Calu3 (cell line): ENCODE measurements at regions of chr3 and their contacts with region 1.

Region 1: GRCh38 chr3:165854696-165855095 is 17.5 kb upstream of the BCHE start:
- DNase-seq: no peak
- H3K4me3 Mint-ChIP-seq: no peak overlapping the region
- H3K27ac Mint-ChIP-seq: no peak overlapping the region
- H3K4me1 Mint-ChIP-seq: peaks cover 7% of the 10 kb centered on the region
- H3K27me3 Mint-ChIP-seq: no peaks in the 10 kb centered on the region
- CTCF ChIP-seq: peak; percentile 90

Region 2: DNA sequence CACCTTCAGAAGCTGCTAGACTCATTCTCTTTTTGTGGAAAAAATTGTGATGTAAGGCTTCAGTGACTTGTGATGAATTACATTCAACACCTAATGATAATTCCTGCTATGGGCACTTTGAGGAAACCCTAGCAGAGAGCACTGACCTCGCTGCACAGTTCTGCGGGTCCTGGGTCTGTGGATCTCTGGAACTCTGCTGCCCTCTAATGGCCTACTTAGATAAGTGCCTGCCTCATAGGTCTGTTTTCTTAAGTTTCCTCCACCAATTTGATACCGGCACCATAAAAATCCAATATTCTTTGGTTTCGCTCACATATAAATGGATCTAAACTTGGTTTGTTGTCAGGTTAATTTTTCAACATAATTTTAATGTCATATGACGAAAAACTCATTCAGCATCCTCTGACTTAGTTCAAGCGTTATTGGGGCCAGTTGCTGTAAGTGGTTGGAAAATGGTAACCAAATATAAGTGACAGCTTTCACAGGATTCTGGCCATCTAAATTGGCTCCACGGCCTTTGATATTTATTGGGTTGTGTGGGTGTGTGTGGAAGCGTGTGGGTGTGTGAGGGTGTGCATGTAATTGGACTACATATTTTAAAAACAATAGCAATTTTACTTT is 668.9 kb before region 1 on chr3:
- CTCF ChIA-PET with region 1: no interaction called
- intact Hi-C with region 1: no loop called
- DNase-seq: peak; percentile 81
- H3K4me3 Mint-ChIP-seq: no peak overlapping the region
- H3K27ac Mint-ChIP-seq: no peak overlapping the region
- H3K4me1 Mint-ChIP-seq: peaks cover 8% of the 10 kb centered on the region
- H3K27me3 Mint-ChIP-seq: no peaks in the 10 kb centered on the region
- CTCF ChIP-seq: peak; percentile 91

Region 3: DNA sequence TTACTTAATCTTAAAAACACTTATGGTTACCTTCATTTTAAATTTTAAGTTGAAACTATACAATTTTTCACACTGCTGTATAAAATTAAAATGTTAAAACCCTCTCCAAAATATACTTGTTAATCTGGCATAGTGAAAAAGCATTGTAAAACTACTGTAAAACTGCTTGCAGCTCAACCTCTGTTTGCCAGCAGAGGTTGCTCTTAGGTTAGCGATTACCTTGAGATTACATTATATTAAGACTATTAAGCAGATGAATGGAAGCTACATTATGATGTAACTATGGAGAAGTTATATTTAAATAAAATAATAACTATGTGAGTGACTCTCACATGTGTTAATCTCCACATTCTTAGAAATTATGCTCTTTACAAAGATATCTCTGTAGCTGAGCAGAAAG is 514.9 kb before region 1 on chr3:
- CTCF ChIA-PET with region 1: interaction called, 5 read pairs
- intact Hi-C with region 1: loop called (anchors 5 kb)
- DNase-seq: peak; percentile 14
- H3K4me3 Mint-ChIP-seq: no peak overlapping the region
- H3K27ac Mint-ChIP-seq: no peak overlapping the region
- H3K4me1 Mint-ChIP-seq: no peaks in the 10 kb centered on the region
- H3K27me3 Mint-ChIP-seq: no peaks in the 10 kb centered on the region
- CTCF ChIP-seq: peak; percentile 36

Region 4: DNA sequence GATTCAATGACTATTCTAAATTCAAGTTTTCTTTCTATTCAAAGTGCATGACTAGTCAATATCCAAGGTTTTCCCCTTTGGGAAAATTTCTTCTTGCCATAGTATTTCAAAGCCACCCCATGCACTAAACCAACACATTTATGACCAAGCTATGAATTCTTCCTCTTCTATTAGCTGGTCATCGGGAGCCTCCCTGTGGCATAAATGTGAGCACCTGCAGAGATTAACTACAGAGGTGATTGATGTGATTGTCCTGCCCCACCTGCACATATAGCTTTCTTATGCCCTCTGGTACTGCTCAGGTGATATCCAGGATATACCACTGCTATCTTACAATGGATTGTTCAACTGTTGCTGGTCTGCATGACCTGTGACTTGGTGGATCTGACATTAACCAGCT is 830.5 kb after region 1 on chr3:
- CTCF ChIA-PET with region 1: no interaction called
- intact Hi-C with region 1: loop called (anchors 5 kb)
- DNase-seq: no peak
- H3K4me3 Mint-ChIP-seq: no peak overlapping the region
- H3K27ac Mint-ChIP-seq: no peak overlapping the region
- H3K4me1 Mint-ChIP-seq: no peaks in the 10 kb centered on the region
- H3K27me3 Mint-ChIP-seq: no peaks in the 10 kb centered on the region
- CTCF ChIP-seq: no peak

Region 5: DNA sequence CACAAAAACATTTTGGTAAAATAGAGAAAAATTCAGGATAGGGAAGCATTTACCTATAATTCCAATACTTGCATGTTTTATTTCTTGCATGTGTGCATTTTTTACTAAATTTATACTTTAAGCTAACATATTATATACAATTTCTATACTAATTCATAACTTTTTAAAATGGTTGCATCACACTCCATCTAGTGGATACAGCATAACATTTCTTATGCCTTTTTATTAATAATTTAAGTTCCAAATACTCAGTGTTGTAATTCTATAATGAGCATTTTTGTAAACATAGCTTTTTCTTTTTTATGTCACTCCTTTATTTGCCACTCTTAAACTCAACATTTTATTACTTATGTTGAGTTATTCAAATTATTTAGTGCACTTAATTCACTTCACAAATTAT is 1047.7 kb after region 1 on chr3:
- CTCF ChIA-PET with region 1: no interaction called
- intact Hi-C with region 1: loop called (anchors 10 kb)
- DNase-seq: no peak
- H3K4me3 Mint-ChIP-seq: no peak overlapping the region
- H3K27ac Mint-ChIP-seq: no peak overlapping the region
- H3K4me1 Mint-ChIP-seq: no peaks in the 10 kb centered on the region
- H3K27me3 Mint-ChIP-seq: no peaks in the 10 kb centered on the region
- CTCF ChIP-seq: no peak

Region 6: DNA sequence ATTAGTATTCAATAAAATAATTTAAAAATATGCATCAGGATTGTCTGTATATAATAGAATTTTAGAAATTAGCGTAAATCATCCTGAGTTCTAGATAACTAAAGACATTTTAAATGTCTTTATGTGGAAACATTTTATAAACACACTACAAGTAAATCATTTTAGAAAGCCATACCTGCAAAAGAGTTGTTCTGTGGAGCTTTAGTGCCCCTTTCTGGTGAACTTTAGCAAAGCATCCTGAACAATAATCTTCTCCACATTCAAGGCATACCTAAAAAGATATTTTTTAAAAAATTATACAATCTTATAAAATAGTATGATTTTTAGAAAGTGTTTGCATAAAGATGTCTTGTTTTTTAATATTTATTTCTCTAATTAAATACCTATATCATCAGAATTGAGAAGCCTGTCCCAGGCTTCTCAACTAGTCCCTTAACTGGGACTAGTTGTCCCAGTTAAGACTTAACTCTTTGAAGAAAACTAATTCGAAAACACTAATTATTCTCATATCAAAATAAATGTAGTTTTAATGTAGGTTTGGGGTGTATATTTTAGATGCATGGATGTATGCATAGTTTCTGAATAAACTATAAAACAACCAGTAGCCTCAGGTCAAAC is 1495.7 kb after region 1 on chr3:
- CTCF ChIA-PET with region 1: no interaction called
- intact Hi-C with region 1: loop called (anchors 5 kb)
- DNase-seq: peak; percentile 48
- H3K4me3 Mint-ChIP-seq: no peak overlapping the region
- H3K27ac Mint-ChIP-seq: no peak overlapping the region
- H3K4me1 Mint-ChIP-seq: peaks cover 15% of the 10 kb centered on the region
- H3K27me3 Mint-ChIP-seq: no peaks in the 10 kb centered on the region
- CTCF ChIP-seq: peak; percentile 79